PC-9 (cell line): ENCODE measurements at regions of chr17 and their contacts with region 1.

Region 1: DNA sequence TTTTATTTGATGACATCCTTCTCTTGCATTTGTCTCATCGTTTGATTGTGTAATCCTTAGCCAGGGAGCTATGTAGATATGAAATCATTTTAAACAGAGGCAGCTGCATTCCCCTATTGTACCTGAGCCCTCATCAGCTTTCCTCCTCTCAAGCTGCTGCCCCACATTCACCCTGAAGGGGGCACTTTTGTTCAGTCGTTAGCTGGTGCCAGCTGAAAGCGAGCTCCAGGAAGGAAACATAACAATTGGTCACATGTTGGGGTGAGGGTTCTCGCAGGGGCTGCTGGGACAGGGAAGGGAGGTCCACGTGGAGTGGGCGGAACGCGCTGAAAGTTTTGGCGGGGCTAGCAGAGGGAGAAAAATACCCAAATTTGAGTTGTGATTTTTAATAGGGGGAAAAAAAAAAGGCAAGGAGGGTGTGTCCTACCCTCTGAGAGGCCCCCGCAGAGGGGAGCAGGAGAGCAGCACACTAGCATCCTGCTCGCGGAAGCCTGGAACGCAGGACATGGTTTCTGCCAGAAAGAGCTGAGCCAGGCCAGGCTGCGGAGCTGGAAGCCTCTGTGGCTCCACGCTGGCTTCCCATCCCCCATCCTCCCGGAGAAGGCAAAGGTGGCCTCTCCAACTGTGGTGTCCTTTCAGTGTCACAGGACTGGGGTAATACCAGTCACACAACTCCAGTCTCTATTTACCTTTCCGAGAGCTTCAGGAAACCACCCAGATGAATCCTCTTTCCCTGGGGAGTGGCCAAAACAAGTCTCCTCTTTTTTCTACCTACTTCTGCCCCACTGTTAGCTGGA is 8.5 kb upstream of the MSL1 start:
- DNase-seq: peak; percentile 88 to 89
- H3K4me3 ChIP-seq: peak overlapping the region; percentile 47; the same call in 1 of the 2 replicates
- H3K27ac ChIP-seq: peak overlapping the region; percentile 82
- H3K4me1 ChIP-seq: peaks cover 38% of the 10 kb centered on the region
- H3K27me3 ChIP-seq: no peaks in the 10 kb centered on the region
- CTCF ChIP-seq: peak; percentile 86

Region 2: DNA sequence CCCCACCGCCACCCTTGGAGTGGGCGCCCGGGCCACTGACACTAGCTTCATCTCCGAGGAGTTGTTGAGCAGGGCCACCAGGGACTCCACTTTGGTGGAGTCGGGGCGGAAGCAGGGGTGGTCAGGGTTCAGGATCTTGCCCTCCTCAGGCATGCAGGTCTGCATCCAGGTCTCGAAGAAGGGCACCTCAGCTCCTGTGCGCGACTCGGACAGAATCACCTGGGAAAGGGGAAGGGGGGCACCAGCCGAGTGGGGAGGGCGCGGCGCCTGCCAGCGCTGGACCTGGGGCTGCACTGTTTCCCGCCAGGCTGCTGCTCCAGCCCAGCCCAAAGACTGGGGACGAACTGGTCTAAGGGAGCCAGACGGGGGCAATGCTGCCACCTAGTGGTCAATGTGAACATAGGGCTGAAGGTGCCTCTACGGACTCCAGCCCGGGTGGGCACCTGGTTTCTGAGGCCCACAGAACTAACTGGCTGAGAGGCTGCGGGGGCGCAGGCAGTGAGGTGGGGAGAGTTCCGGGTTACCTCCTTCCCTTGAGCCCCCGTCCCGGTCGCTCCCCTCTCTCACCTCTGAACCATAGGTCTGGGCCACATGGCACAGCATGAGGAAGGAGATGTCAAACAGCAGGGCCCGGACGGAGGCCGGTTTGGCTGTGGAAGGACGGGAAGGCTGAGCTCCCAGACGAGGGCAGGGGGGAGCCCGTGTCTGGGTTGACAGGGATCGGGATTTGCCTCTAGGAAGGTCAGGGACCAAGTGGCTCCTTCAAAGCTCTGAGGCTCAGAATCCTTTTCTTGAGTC is 86.3 kb before region 1 on chr17:
- CTCF ChIA-PET with region 1: interaction called, 5 read pairs
- POLR2A ChIA-PET with region 1: no interaction called
- intact Hi-C with region 1: loop called (anchors 1 kb)
- DNase-seq: peak; percentile 49 to 71
- H3K4me3 ChIP-seq: no peak overlapping the region
- H3K27ac ChIP-seq: peak overlapping the region; percentile 70
- H3K4me1 ChIP-seq: peaks cover 52% of the 10 kb centered on the region
- H3K27me3 ChIP-seq: no peaks in the 10 kb centered on the region
- CTCF ChIP-seq: peak; percentile 91

Region 3: DNA sequence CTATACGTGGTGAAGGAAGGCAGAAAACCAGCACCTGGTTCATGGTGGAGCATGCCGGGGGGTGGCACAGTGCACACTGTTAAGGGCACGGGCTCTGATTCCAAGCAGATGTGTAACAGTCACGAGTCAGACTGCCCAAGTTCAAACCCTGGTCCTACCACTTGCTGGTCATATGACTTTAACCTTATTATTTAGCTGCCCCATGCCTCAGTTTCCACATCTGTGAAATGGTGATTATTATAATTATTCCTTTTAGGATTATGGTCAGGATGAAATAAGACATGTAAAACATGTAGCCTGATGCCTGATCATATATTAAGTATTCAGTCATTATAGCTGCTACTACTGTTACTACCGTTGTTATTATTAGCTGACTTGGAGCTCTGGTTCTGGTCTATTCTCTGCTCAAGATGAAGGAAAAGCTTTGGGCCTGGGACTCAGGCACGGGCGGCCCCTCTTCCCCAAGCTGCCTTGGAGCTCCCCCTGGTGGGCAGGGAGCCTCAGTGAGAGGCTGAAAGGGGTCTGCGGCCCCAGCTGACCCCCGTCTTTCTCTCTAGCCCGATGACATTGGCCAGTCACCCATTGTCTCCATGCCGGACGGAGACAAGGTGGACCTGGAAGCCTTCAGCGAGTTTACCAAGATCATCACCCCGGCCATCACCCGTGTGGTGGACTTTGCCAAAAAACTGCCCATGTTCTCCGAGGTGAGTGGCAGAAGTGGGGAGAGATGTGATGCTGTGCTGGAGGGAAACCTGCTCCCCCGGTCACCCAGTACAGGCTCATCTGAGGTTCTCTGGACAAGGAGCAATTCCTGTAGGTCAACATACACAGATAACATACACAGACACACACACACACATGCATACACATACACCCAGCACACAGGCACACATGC is 26.9 kb before region 1 on chr17:
- CTCF ChIA-PET with region 1: no interaction called
- POLR2A ChIA-PET with region 1: no interaction called
- intact Hi-C with region 1: loop called (anchors 1 kb)
- DNase-seq: no peak
- H3K4me3 ChIP-seq: no peak overlapping the region
- H3K27ac ChIP-seq: no peak overlapping the region
- H3K4me1 ChIP-seq: no peaks in the 10 kb centered on the region
- H3K27me3 ChIP-seq: no peaks in the 10 kb centered on the region
- CTCF ChIP-seq: peak; percentile 84

Region 4: DNA sequence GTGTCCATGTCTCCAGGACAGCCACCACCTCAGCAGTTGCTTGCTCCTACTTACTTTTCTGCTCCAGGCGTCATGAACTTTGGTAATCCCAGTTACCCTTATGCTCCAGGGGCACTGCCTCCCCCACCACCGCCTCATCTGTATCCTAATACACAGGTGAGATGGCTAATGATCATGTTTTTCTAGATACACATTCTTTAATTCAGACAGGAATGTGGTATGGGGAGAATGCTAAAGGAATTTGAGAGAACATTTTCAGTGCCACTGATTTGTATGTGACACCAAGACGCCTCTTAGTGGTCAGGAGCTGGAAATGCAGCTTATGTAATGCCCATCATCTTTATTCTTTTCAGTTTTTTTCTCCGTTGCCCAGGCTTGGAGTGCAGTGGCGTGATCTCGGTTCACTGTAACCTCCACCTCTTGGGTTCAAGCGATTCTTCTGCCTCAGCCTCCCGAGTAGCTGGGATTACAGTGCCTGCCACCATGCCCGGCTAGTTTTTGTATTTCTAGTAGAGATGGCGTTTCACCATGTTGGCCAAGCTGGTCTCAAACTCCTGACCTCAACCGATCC is 55.0 kb after region 1 on chr17:
- CTCF ChIA-PET with region 1: interaction called, 8 read pairs
- POLR2A ChIA-PET with region 1: interaction called, 3 read pairs
- intact Hi-C with region 1: loop called (anchors 1 kb)
- DNase-seq: peak; percentile 50 to 92
- H3K4me3 ChIP-seq: no peak overlapping the region
- H3K27ac ChIP-seq: no peak overlapping the region
- H3K4me1 ChIP-seq: peaks cover 6% of the 10 kb centered on the region; the same call in 1 of the 2 replicates
- H3K27me3 ChIP-seq: no peaks in the 10 kb centered on the region
- CTCF ChIP-seq: peak; percentile 90

Region 5: GRCh38 chr17:40287494-40288369 is 174.4 kb after region 1 on chr17 and contains the start of gene CDC6:
- CTCF ChIA-PET with region 1: interaction called, 5 read pairs
- POLR2A ChIA-PET with region 1: interaction called, 6 read pairs
- intact Hi-C with region 1: loop called (anchors 1 kb)
- DNase-seq: peak; percentile 94 to 98
- H3K4me3 ChIP-seq: peak within 1 kb of the TSS; percentile 87
- H3K27ac ChIP-seq: peak within 1 kb of the TSS; percentile 66
- H3K4me1 ChIP-seq: peaks cover 60% of the 10 kb centered on the region
- H3K27me3 ChIP-seq: no peaks in the 10 kb centered on the region
- CTCF ChIP-seq: no peak
- total RNA-seq, gene CDC6: 37.8 and 44.9 TPM in 2 replicates